Caco-2 (cell line): ENCODE measurements at regions of chr7 and their contacts with region 1.

Region 1: GRCh38 chr7:105336009-105336408 is 52.7 kb downstream of the SRPK2 start:
- DNase-seq: no peak
- H3K4me3 ChIP-seq: no peak overlapping the region
- H3K4me3 Mint-ChIP-seq: no peak overlapping the region
- H3K27ac Mint-ChIP-seq: no peak overlapping the region
- H3K4me1 ChIP-seq: no peaks in the 10 kb centered on the region
- H3K4me1 Mint-ChIP-seq: no peaks in the 10 kb centered on the region
- H3K27me3 ChIP-seq: no peaks in the 10 kb centered on the region
- H3K27me3 Mint-ChIP-seq: no peaks in the 10 kb centered on the region
- CTCF ChIP-seq: peak; percentile 17 to 40

Region 2: GRCh38 chr7:105118612-105119600 is 217.1 kb before region 1 on chr7:
- CTCF ChIA-PET with region 1: no interaction called
- POLR2A ChIA-PET with region 1: no interaction called
- intact Hi-C with region 1: no loop called
- DNase-seq: no peak
- H3K4me3 ChIP-seq: no peak overlapping the region
- H3K4me3 Mint-ChIP-seq: no peak overlapping the region
- H3K27ac Mint-ChIP-seq: no peak overlapping the region
- H3K4me1 ChIP-seq: no peaks in the 10 kb centered on the region
- H3K4me1 Mint-ChIP-seq: no peaks in the 10 kb centered on the region
- H3K27me3 ChIP-seq: no peaks in the 10 kb centered on the region
- H3K27me3 Mint-ChIP-seq: no peaks in the 10 kb centered on the region
- CTCF ChIP-seq: no peak

Region 3: DNA sequence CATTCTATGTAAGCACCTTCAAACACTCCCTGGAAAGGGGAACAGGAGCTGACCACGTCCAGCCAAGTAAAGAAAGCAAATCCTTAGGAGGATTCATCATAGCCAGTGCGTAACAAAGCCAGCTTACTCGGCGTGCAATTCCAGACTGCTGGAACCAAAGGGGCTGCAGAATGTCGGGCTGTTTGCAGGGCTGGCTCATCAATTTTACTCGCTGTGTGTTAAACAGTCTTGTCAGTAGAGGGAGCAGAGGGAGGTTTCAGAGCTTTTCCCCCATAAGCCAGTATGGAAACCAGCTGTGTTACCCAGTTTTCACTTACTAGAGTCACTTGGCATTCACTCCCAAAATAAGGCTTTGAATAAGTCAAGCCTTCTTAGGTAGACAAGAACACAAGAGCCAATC is 194.9 kb before region 1 on chr7:
- CTCF ChIA-PET with region 1: no interaction called
- POLR2A ChIA-PET with region 1: no interaction called
- intact Hi-C with region 1: loop called (anchors 1 kb)
- DNase-seq: peak in 1 of 2 experiments; percentile 29
- H3K4me3 ChIP-seq: no peak overlapping the region
- H3K4me3 Mint-ChIP-seq: no peak overlapping the region
- H3K27ac Mint-ChIP-seq: no peak overlapping the region
- H3K4me1 ChIP-seq: no peaks in the 10 kb centered on the region
- H3K4me1 Mint-ChIP-seq: peaks cover 10% of the 10 kb centered on the region
- H3K27me3 ChIP-seq: no peaks in the 10 kb centered on the region
- H3K27me3 Mint-ChIP-seq: no peaks in the 10 kb centered on the region
- CTCF ChIP-seq: peak; percentile 19 to 56

Region 4: DNA sequence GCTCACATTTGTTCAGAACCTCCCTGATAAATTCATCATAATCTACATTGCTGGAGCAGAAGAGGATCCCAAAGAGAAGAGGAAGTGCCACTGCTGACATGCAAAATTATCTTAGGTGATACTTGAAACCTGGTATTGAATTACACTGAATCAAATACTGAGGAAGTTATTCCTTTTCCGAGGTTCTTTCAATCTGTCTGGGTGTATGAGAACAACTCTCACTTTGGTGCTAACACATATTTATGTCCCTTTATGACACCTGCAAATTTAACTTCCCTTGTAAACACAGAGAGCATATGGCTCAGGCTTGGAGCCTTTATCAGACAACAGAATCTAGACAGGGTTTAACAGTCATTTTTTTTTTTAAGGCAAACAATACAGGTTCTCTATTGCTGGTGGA is 78.7 kb before region 1 on chr7:
- CTCF ChIA-PET with region 1: no interaction called
- POLR2A ChIA-PET with region 1: no interaction called
- intact Hi-C with region 1: no loop called
- DNase-seq: no peak
- H3K4me3 ChIP-seq: no peak overlapping the region
- H3K4me3 Mint-ChIP-seq: no peak overlapping the region
- H3K27ac Mint-ChIP-seq: no peak overlapping the region
- H3K4me1 ChIP-seq: no peaks in the 10 kb centered on the region
- H3K4me1 Mint-ChIP-seq: no peaks in the 10 kb centered on the region
- H3K27me3 ChIP-seq: no peaks in the 10 kb centered on the region
- H3K27me3 Mint-ChIP-seq: no peaks in the 10 kb centered on the region
- CTCF ChIP-seq: no peak